Activated CD4-positive, alpha-beta memory T cell treated with anti-CD3 and anti-CD28 coated beads for 36 hours (primary cell): ENCODE measurements at regions of chr2 and their contacts with region 1.

Region 1: DNA sequence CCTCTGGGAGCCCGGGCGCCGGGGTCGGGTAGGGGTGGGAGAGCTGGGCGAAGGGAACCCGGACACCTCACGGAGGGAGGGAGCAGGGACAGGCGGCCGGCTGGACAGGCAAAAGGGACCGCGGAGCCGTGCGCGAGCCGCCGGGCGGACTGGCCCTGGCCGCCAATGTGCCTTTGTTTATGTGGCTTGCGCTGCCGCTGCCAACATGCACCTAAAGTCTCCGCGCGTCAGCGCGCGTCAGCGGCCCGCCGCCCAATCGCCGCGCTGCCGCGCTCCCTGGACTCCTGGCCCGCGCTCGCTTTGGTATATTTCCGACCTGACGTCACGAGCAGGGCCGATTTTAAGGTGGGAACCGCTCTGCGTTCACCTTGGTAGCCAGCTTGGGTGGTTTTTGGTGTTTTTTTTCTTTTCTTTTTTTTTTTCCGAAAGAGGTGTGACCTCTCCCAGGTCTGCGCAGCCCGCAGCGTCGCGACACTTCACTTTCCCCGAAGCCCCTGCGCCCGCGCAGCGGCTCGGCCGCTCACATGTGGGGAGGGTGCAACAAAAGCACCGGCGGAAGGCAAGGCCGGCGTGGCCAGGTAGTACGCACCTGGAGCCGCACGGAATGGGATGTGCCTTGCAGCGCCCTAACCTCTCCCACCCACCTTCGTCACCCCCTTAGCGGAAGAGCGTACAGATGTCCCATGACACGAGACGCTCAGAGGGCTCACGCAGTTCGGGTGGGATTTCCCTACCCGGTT is at the start of gene NR4A2:
- DNase-seq: peak; percentile 92
- H3K4me3 Mint-ChIP-seq: peak within 1 kb of the TSS; percentile 94
- H3K27ac Mint-ChIP-seq: peak within 1 kb of the TSS; percentile 97
- H3K4me1 Mint-ChIP-seq: peaks cover 45% of the 10 kb centered on the region
- H3K27me3 Mint-ChIP-seq: peaks cover 2% of the 10 kb centered on the region
- total RNA-seq, gene NR4A2: 9.3 to 10.0 TPM

Region 2: GRCh38 chr2:155377266-155377680 is 955.4 kb before region 1 on chr2:
- CTCF ChIA-PET with region 1: interaction called, 6 read pairs
- POLR2A ChIA-PET with region 1: no interaction called
- intact Hi-C with region 1: loop called (anchors 1 kb)
- DNase-seq: no peak
- H3K4me3 Mint-ChIP-seq: no peak overlapping the region
- H3K27ac Mint-ChIP-seq: no peak overlapping the region
- H3K4me1 Mint-ChIP-seq: peaks cover 20% of the 10 kb centered on the region
- H3K27me3 Mint-ChIP-seq: no peaks in the 10 kb centered on the region

Region 3: DNA sequence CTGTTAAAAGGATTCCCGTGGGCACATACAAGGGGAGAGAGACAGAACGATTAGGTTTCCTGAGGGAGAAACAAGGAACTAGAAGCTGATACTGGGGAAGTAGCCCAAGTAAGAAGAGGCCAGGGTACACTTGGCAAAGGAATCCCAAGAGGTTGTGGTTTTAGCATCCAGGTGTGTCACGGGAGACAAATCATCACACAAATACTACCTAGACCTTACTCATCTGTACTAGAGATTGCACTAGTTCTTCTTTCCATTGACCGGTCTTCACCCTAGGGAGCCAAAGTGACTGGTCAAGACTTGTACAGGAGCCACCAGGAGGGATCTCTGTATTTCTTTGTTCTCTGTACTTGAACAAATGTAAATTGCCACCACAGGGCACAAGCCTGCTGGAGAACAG is 14.0 kb after region 1 on chr2:
- CTCF ChIA-PET with region 1: interaction called, 14 read pairs
- POLR2A ChIA-PET with region 1: interaction called, 39 read pairs
- intact Hi-C with region 1: loop called (anchors 1 kb)
- DNase-seq: no peak
- H3K4me3 Mint-ChIP-seq: no peak overlapping the region
- H3K27ac Mint-ChIP-seq: no peak overlapping the region
- H3K4me1 Mint-ChIP-seq: peaks cover 21% of the 10 kb centered on the region
- H3K27me3 Mint-ChIP-seq: no peaks in the 10 kb centered on the region

Region 4: GRCh38 chr2:156400706-156401678 is 68.3 kb after region 1 on chr2:
- CTCF ChIA-PET with region 1: interaction called, 34 read pairs
- POLR2A ChIA-PET with region 1: interaction called, 16 read pairs
- intact Hi-C with region 1: loop called (anchors 1 kb)
- DNase-seq: peak; percentile 82
- H3K4me3 Mint-ChIP-seq: peak overlapping the region; percentile 84
- H3K27ac Mint-ChIP-seq: peak overlapping the region; percentile 95
- H3K4me1 Mint-ChIP-seq: peaks cover 18% of the 10 kb centered on the region
- H3K27me3 Mint-ChIP-seq: peaks cover 5% of the 10 kb centered on the region

Region 5: DNA sequence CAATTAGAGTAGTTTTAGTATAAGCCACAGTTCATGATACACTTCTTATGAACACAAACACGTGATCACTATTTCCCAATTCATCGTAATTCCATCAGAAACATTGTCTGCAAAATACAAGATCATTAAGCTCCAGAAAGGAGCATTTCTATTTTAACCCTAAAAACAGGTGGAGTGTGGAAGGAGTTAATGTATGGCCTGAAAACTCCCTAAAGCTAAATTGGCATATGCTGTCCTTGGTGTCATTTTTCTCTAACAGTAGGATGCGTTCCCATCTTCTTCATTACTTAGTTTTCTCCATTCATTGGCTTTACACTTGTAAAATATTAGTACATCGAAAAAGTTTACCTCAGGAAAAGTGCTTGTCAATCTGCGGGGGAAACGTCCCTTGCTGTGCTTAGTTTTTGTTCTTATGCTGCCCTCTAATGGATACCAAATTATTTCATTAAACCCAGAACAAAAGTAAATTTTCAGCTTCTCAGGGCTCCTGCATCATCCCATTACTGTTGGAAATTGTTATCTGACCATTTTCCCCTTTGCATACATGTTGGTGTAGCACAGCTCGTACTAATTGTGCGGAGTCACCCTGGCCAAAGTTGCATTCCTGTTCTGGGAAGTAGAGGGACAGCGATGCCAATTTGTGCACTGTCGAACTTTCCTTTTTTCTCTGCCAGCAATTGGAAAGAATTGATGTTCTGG is 256.8 kb after region 1 on chr2:
- CTCF ChIA-PET with region 1: interaction called, 62 read pairs
- POLR2A ChIA-PET with region 1: no interaction called
- intact Hi-C with region 1: loop called (anchors 1 kb)
- DNase-seq: peak; percentile 10
- H3K4me3 Mint-ChIP-seq: no peak overlapping the region
- H3K27ac Mint-ChIP-seq: no peak overlapping the region
- H3K4me1 Mint-ChIP-seq: peaks cover 4% of the 10 kb centered on the region
- H3K27me3 Mint-ChIP-seq: no peaks in the 10 kb centered on the region

Region 6: GRCh38 chr2:157261199-157261783 is 928.6 kb after region 1 on chr2:
- CTCF ChIA-PET with region 1: no interaction called
- POLR2A ChIA-PET with region 1: no interaction called
- intact Hi-C with region 1: loop called (anchors 2 kb)
- DNase-seq: peak; percentile 81
- H3K4me3 Mint-ChIP-seq: no peak overlapping the region
- H3K27ac Mint-ChIP-seq: peak overlapping the region; percentile 18
- H3K4me1 Mint-ChIP-seq: peaks cover 19% of the 10 kb centered on the region
- H3K27me3 Mint-ChIP-seq: peaks cover 5% of the 10 kb centered on the region

Region 7: GRCh38 chr2:157468931-157469708 is 1136.4 kb after region 1 on chr2:
- CTCF ChIA-PET with region 1: no interaction called
- POLR2A ChIA-PET with region 1: no interaction called
- intact Hi-C with region 1: loop called (anchors 1 kb)
- DNase-seq: no peak
- H3K4me3 Mint-ChIP-seq: peak overlapping the region; percentile 69
- H3K27ac Mint-ChIP-seq: peak overlapping the region; percentile 99
- H3K4me1 Mint-ChIP-seq: peaks cover 91% of the 10 kb centered on the region
- H3K27me3 Mint-ChIP-seq: no peaks in the 10 kb centered on the region